AG04450 (cell line): ENCODE measurements at regions of chr3 and their contacts with region 1.

Region 1: DNA sequence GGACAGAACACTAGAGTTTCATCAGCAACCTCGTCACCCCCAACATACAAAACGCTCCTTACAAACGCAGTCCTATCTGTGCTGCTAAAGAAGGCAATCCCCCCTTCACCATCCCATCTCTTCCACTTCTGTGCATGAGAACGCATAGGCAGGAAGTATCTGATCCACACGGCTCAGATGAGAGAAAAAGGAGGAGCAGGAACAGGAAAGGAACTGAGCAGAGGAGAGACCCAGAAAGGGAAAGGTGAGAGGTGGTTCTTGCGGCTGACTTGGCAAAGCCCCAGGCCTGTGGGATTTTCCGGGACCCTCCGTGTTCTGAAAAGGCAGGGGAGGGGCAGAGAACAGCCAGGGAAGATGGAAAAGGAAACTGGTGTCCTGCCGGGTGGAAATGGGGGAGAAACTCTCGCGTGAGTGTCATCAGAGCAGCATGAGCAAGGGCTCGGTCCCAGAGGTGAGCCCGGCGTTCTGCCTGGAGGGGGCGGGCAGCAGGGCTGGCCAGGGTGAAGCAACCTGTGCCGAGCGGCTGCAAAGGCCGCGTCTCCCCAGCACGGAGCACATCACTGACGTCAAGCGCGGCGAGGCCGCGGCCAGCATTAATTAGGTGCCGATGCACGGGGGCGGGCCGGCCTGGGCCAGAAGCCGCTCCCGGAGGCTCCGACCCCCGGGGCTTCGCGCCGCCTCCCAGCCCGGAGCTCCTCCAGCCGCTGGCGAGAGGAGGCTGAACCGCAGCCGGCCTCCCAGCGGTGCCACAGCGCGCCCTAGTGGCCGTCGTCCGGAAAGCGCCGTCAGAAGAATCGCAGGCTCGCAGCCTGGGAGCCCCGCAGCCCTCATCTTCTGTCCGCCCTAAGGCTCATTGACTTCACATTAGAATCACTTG is 35.8 kb downstream of the CPN2 start:
- DNase-seq: no peak
- H3K4me3 ChIP-seq: peak overlapping the region; percentile 59
- H3K27ac ChIP-seq: no peak overlapping the region
- H3K27me3 ChIP-seq: peaks cover 48% of the 10 kb centered on the region
- CTCF ChIP-seq: peak; percentile 92

Region 2: DNA sequence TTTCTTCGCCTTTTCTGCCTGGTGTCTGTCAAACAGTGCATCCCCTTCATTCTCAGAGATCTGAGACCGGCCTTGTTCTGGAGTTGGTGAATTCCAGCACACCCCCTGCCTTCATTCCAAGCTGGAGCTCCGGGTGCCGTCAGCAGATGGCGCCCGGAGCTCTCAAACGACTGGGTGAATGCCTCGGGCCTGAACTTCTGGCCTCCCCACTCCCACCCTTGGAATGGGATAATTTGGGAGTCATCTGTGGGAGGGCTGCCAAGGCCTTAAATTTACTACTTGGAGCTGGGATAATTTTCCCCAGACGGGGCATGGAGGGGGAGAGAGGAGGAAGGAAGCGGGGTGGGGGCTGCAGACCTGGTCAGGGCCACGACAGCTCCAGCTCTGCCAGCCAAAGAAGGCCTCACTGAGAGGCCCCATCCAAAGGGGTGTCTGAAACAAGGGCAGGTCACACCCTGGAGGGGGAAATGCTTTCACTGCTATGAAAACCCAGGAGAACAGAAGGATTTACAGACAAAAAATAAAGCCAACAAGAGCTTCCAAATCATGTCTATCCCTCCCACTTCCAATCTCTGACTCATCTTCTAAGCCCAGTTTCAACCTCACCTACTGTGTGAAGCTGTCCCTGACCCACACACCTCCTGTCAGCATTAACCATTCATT is 534.4 kb before region 1 on chr3:
- CTCF ChIA-PET with region 1: interaction called, 280 read pairs
- POLR2A ChIA-PET with region 1: interaction called, 4 read pairs
- DNase-seq: peak; percentile 27
- H3K4me3 ChIP-seq: no peak overlapping the region
- H3K27ac ChIP-seq: peak overlapping the region; percentile 11
- H3K27me3 ChIP-seq: peaks cover 61% of the 10 kb centered on the region
- CTCF ChIP-seq: peak; percentile 87

Region 3: GRCh38 chr3:194003125-194004057 is 311.9 kb before region 1 on chr3:
- CTCF ChIA-PET with region 1: interaction called, 17 read pairs
- POLR2A ChIA-PET with region 1: no interaction called
- DNase-seq: peak; percentile 47
- H3K4me3 ChIP-seq: peak overlapping the region; percentile 47
- H3K27ac ChIP-seq: peak overlapping the region; percentile 11
- H3K27me3 ChIP-seq: peaks cover 27% of the 10 kb centered on the region
- CTCF ChIP-seq: no peak

Region 4: DNA sequence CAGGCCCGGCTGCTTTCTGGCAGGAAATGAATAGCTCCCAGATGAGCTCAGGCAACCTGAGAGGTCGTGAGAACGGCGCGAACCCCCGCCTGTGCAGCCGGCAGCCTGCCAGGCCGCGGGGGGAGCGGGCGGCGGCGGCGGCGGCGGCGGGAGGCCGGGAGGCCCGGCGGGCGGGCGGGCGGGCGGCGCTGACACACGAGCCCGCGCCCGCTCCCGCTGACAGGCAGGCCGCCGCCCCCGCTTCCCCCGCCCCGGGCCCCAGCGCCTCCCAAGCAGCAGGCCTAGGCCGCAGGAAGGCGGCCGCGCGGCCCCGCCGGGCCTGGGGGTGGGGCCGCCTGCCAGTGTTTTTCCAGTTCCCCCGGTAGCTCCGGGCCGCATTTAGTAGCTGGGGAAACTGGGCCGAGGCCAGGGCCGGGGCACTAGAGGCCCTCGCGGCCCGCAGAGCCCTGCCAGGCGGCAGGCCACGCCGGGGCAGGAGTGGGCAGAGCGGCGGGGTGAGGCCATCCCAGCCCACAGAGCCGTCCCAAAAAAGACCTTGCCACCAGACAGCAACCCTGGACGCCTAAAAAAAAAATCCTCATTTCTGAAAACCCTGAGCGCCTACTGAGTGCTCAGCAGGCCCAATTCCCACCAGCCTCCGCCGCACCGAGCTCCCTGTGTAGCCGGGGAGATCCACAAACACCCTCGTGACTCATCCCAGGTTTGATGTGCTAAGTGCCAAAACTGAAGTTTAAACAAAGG is 173.7 kb before region 1 on chr3:
- CTCF ChIA-PET with region 1: interaction called, 25 read pairs
- POLR2A ChIA-PET with region 1: interaction called, 4 read pairs
- DNase-seq: peak; percentile 69
- H3K4me3 ChIP-seq: peak overlapping the region; percentile 47
- H3K27ac ChIP-seq: peak overlapping the region; percentile 71
- H3K27me3 ChIP-seq: peaks cover 6% of the 10 kb centered on the region
- CTCF ChIP-seq: no peak

Region 5: DNA sequence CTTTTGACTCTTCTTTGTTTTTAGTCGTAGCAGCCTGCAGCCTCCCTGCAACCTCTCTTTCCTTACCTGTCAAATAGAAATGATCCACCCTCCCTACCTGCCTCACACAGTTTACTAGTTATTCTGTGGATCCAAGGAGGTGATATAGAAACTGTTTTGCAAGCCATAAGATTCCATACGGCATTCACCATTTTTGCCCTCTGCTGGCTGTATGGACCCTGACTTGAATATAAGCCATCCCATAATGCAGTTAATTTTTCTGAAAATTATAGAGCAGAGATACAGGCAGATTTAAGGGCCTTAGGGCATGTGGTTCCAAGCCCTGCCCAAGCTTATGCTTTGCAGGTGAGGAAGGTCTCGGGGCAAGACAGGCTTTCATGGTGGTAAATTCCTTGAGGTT is 28.0 kb before region 1 on chr3:
- CTCF ChIA-PET with region 1: interaction called, 10 read pairs
- POLR2A ChIA-PET with region 1: no interaction called
- DNase-seq: no peak
- H3K4me3 ChIP-seq: no peak overlapping the region
- H3K27ac ChIP-seq: no peak overlapping the region
- H3K27me3 ChIP-seq: peaks cover 32% of the 10 kb centered on the region
- CTCF ChIP-seq: no peak

Region 6: DNA sequence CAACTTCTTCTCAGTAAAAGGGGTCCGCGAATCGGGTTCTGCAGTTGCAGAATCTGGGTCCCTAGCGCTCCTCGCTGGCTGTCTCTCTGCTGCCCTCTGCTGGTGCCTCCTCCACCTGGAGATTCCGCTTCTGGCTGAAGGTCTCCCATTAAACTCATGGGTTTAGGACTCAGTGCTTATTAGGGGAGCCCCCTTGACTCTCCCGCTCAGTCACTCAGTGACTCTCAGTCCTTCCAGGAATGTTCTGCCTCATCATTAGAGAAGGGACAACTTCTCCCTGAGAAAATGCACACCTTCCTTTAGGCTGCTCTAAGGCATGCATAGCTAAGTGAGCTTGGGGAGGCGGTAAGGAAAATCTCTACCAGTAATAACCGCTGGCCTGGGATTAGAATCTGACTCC is 28.7 kb after region 1 on chr3:
- CTCF ChIA-PET with region 1: interaction called, 12 read pairs
- POLR2A ChIA-PET with region 1: no interaction called
- DNase-seq: no peak
- H3K4me3 ChIP-seq: no peak overlapping the region
- H3K27ac ChIP-seq: no peak overlapping the region
- H3K27me3 ChIP-seq: no peaks in the 10 kb centered on the region
- CTCF ChIP-seq: peak; percentile 98